ENCODE measurements at regions of chr1 and their contacts with region 1.

Region 1: GRCh38 chr1:86380257-86380861 is 15.8 kb downstream of the ODF2L start:
- DNase-seq: peak; percentile 73
- H3K4me3 ChIP-seq: no peak overlapping the region
- H3K27ac ChIP-seq: no peak overlapping the region
- H3K4me1 ChIP-seq: no peaks in the 10 kb centered on the region
- H3K27me3 ChIP-seq: no peaks in the 10 kb centered on the region
- CTCF ChIP-seq: peak; percentile 76

Region 2: GRCh38 chr1:86704458-86704971 is 324.2 kb after region 1 on chr1 and contains the start of gene SH3GLB1:
- CTCF ChIA-PET with region 1: no interaction called
- POLR2A ChIA-PET with region 1: no interaction called
- intact Hi-C with region 1: loop called (anchors 10 kb)
- DNase-seq: peak; percentile 89
- H3K4me3 ChIP-seq: peak within 1 kb of the TSS; percentile 98
- H3K27ac ChIP-seq: peak within 1 kb of the TSS; percentile 86
- H3K4me1 ChIP-seq: peaks cover 14% of the 10 kb centered on the region
- H3K27me3 ChIP-seq: no peaks in the 10 kb centered on the region
- CTCF ChIP-seq: peak; percentile 95
- total RNA-seq, gene SH3GLB1: 43.4 and 45.9 TPM in 2 replicates

Region 3: GRCh38 chr1:87644579-87645190 is 1264.3 kb after region 1 on chr1:
- CTCF ChIA-PET with region 1: no interaction called
- POLR2A ChIA-PET with region 1: no interaction called
- intact Hi-C with region 1: no loop called
- DNase-seq: no peak
- H3K4me3 ChIP-seq: no peak overlapping the region
- H3K27ac ChIP-seq: no peak overlapping the region
- H3K4me1 ChIP-seq: peaks cover 14% of the 10 kb centered on the region
- H3K27me3 ChIP-seq: no peaks in the 10 kb centered on the region
- CTCF ChIP-seq: no peak

Measured in A673 (cell line).